ENCODE measurements at regions of chr2 and their contacts with region 1.

Region 1: DNA sequence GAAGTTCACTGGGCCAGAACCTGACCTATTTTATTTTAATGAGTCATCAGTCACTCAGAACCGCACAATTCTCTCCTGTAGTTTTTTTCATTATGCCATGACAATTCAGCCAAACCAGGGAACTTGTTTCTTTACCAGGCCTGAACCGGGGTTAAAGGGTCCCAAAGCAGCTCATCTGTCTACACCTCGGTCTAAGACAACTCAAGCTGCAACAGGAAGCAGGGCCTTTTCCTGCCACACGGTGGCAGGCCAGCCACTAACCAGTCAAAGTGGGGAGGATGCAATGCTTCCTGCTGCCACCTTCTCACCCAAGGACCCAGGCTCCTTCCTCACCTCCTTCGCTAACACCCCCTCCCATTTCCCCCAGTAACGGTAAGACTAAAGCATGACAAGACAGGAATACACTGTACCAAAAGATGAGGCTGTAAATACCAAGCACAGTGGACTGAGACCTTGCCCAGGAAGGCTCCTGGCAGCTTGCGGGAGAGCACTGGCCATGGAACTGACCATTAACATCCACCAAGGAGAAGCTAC is 56.7 kb upstream of the ACKR3 start:
- DNase-seq: peak; percentile 82
- ATAC-seq: peak; percentile 83

Region 2: GRCh38 chr2:236284208-236284607 is 228.8 kb before region 1 on chr2:
- intact Hi-C with region 1: no loop called
- DNase-seq: no peak
- ATAC-seq: peak; percentile 57

Region 3: DNA sequence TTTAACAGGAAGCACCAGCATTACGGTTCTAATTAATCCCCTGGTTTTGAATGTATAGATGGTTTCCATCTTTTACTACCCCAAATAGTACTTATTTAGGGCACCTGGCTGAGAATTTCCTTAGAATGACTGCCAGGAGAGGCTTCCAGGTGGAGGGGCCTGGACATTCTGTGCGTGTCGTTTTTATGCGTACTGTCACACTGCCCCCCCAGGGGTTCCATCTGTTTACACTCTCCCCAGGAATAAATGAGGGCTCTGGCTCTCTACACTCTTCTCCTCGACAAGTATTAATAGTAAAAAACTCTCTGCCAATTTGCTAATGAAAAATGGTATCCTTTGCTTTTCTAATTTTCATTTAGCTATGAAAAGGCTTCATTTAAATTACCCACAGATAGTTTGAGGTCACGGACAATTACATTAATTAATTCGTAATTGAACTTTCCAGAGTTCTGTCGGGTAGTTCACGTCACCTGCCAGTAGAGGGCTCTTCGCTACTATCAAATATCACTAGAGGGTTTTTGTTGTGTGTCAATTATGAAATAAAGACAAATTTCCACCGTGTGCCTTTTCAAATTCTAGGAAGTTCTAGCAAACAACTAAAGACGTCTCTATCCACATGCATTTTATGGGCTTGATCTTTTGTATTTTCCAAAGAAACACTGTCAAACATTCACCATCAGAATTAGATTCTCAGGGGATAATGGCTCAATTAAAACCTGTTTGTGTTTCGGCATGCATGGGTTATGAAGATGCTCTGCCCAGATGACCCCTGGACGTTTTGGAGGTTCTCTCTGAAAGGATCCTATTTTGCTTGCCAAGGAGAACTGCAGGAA is 160.0 kb before region 1 on chr2:
- intact Hi-C with region 1: loop called (anchors 5 kb)
- DNase-seq: no peak
- ATAC-seq: no peak

Region 4: GRCh38 chr2:236394571-236394970 is 118.4 kb before region 1 on chr2:
- intact Hi-C with region 1: no loop called
- DNase-seq: no peak
- ATAC-seq: no peak

Region 5: GRCh38 chr2:236687296-236687965 is 174.5 kb after region 1 on chr2:
- intact Hi-C with region 1: loop called (anchors 1 kb)
- DNase-seq: no peak
- ATAC-seq: peak; percentile 66

Region 6: DNA sequence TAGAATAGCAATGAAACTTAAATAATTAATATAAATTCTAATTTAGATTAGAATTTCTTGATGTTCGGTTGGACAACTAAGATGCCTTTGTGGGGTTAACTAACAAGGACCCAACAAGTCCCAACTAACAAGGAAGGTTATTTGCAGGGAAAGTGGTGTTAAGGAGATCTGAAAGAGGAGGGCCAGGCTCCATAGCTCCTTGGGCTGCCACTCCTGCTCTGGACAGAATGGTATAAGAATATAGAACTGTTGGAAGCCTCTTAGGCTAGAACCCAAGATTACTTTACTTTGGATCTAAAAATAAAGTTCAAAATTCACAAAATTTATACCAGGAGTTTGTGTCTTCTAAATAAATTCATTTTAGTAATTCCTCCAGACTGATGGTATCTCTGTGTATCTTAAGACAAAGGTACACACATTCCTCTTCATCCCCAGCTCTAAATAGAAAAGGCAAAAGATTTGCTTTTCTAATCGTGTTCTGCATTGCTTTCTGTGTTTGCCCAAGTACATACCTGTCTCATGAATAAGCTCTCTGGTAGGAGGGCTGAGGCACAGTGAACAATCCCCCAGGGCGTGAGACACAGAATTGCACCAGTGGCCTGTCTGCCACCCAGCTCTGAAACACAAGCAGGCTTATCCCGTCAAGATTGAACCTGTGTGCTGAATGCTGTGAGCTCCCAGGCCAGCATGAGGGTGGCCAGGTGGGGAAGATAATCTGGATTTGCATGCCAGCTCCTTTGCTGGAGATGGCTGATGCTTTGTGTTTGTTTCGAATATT is 232.6 kb after region 1 on chr2:
- intact Hi-C with region 1: loop called (anchors 10 kb)
- DNase-seq: no peak
- ATAC-seq: no peak

Region 7: DNA sequence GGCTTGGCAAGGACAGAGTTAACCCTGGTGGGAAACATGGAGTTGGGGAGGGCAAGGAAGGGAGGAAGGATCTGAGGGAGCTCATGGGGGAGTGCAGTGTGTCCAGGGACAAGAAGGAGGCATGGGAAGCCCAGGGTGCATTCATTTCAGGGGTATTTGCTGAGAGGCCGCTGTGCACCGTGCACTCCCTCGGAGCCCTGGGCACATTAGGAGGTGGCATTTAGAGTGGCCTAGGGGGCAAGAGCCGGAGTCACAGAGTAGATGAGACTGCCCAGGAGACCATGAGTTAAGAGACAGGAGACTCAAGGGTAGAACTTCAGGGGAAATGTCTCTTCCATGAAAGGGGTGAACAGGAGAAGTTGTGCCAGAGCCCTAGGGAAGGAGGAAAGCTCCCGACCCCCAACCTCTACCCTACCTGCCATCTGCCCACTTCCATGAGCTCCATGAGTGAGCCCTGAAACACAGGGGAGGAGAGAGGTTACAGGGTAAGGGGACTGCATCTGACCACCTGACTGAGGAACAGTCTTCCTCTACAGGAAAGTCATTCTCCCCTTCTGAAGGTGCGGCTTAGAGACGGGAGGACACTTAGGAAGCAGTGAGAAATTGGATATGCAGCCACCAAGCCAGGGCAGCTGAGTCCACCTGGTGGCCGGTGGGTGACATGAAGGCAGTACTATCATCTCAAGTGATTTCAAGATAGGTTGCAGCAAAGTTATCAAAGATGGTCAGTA is 514.2 kb after region 1 on chr2:
- intact Hi-C with region 1: loop called (anchors 1 kb)
- DNase-seq: peak; percentile 80
- ATAC-seq: peak; percentile 87

Region 8: DNA sequence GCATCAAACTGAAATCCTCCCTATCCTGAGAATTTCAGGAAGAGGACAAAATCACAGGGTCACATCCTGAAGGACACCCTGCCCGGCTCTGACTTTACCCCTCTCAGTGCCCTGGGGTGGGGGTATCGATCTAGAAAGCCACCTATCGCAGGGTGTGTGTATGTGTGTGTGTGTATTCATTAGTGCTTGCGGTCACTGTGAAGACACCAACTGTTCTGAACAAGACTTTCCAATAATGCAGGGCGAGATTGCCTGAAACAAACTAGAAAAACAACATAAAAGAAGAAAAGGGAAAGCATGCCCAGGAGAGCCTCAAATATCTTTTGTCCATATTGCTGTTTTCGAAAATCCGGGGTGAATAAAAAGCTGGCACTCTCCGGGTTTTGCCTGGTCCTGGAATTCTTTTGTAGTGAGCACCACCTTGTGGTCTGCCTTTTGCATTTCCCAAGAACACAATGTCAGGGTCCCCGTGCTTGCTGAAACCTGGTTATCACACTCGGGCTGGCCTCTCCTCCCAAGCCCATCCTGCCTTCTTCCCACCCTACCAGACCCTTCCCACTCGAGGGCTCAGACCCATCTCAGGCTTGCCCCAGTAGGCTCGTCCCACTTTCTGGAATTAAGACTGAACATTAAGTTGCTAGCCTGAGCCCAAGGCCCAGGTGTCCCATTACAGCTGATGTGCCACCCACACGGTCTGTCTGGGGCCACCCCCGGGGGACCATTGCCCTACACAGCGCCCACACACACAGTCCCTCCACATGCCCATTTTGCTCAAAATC is 547.8 kb after region 1 on chr2:
- intact Hi-C with region 1: loop called (anchors 5 kb)
- DNase-seq: no peak
- ATAC-seq: peak; percentile 67

Measured in Right ventricle myocardium inferior (tissue), 1 donor.